PC-9 (cell line): ENCODE measurements at regions of chr5 and their contacts with region 1.

Region 1: GRCh38 chr5:134714120-134714519 is 24.2 kb upstream of the CAMLG start:
- DNase-seq: no peak
- H3K4me3 ChIP-seq: no peak overlapping the region
- H3K27ac ChIP-seq: no peak overlapping the region
- H3K4me1 ChIP-seq: no peaks in the 10 kb centered on the region
- H3K27me3 ChIP-seq: no peaks in the 10 kb centered on the region
- CTCF ChIP-seq: no peak

Region 2: GRCh38 chr5:134948911-134949310 is 234.8 kb after region 1 on chr5:
- CTCF ChIA-PET with region 1: interaction called, 11 read pairs
- POLR2A ChIA-PET with region 1: no interaction called
- intact Hi-C with region 1: no loop called
- DNase-seq: no peak
- H3K4me3 ChIP-seq: no peak overlapping the region
- H3K27ac ChIP-seq: no peak overlapping the region
- H3K4me1 ChIP-seq: no peaks in the 10 kb centered on the region
- H3K27me3 ChIP-seq: no peaks in the 10 kb centered on the region
- CTCF ChIP-seq: no peak